A549 (cell line): ENCODE measurements at regions of chr11 and their contacts with region 1.

Region 1: GRCh38 chr11:18105802-18106574 is at the start of gene SAAL1:
- DNase-seq: peak; percentile 88 to 94
- ATAC-seq: peak; percentile 97 to 99
- H3K4me3 ChIP-seq: peak within 1 kb of the TSS; percentile 90
- H3K27ac ChIP-seq: peak within 1 kb of the TSS; percentile 71 to 93
- H3K4me1 ChIP-seq: peaks cover 8% of the 10 kb centered on the region
- CTCF ChIP-seq: peak; percentile 84
- EP300 ChIP-seq: no peak
- POLR2A ChIP-seq: peak; percentile 87
- RAD21 ChIP-seq: no peak
- polyA plus RNA-seq, gene SAAL1: 40.9 and 46.5 TPM in 2 replicates

Region 2: DNA sequence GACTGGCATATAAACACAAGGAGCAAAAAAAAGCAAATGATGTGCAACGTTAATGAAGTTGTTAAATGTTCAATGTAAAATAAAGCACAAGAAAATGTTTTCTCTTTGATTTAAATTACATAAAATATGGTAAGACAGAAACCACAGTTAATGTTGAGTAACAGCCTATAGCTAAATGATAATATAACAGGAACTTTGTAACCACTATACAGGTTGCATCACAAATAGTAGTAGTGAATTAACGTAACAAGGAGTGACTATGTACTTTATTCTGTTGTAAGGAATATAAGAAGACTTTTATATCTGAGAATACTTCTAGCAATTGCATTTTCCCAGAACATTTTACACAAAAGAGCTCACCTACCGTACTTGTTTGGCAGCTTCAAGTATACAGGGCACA is 17.0 kb before region 1 on chr11:
- CTCF ChIA-PET with region 1: interaction called, 12 read pairs
- POLR2A ChIA-PET with region 1: interaction called, 3 read pairs
- DNase-seq: no peak
- ATAC-seq: no peak
- H3K4me3 ChIP-seq: no peak overlapping the region
- H3K27ac ChIP-seq: no peak overlapping the region
- H3K4me1 ChIP-seq: 0 out of 3 replicates have a peak, but pooled peaks cover 5% of the 10 kb centered on the region
- CTCF ChIP-seq: no peak
- EP300 ChIP-seq: no peak
- POLR2A ChIP-seq: no peak
- RAD21 ChIP-seq: no peak

Region 3: GRCh38 chr11:18203723-18204122 is 97.7 kb after region 1 on chr11:
- CTCF ChIA-PET with region 1: no interaction called
- POLR2A ChIA-PET with region 1: no interaction called
- DNase-seq: peak; percentile 28 to 65
- ATAC-seq: peak; percentile 79 to 97
- H3K4me3 ChIP-seq: no peak overlapping the region
- H3K27ac ChIP-seq: no peak overlapping the region
- H3K4me1 ChIP-seq: no peaks in the 10 kb centered on the region
- CTCF ChIP-seq: peak; percentile 37
- EP300 ChIP-seq: no peak
- POLR2A ChIP-seq: no peak
- RAD21 ChIP-seq: peak; percentile 34 to 67; a peak in 2 of 5 replicates